ENCODE measurements at regions of chr15 and their contacts with region 1.

Region 1: GRCh38 chr15:68383161-68384074 is 48.5 kb downstream of the ITGA11 start:
- DNase-seq: peak; percentile 26 to 64
- H3K4me3 ChIP-seq: no peak overlapping the region
- H3K27ac ChIP-seq: peak overlapping the region in 2 of 5 donors; percentile 52 to 53
- H3K4me1 ChIP-seq: peaks cover 0 to 7% (median 0%) of the 10 kb centered on the region in 4 donors
- H3K27me3 ChIP-seq: no peaks in the 10 kb centered on the region
- CTCF ChIP-seq: peak in 5 of 7 experiments; percentile 19 to 63 (median 51)
- EP300 ChIP-seq: no peak
- POLR2A ChIP-seq: no peak

Region 2: GRCh38 chr15:68252925-68253534 is 130.4 kb before region 1 on chr15:
- intact Hi-C with region 1: loop called (anchors 10 kb)
- DNase-seq: peak; percentile 37 to 87
- H3K4me3 ChIP-seq: no peak overlapping the region
- H3K27ac ChIP-seq: no peak overlapping the region
- H3K4me1 ChIP-seq: peaks cover 5 to 23% (median 13%) of the 10 kb centered on the region in 4 donors
- H3K27me3 ChIP-seq: no peaks in the 10 kb centered on the region
- CTCF ChIP-seq: peak in 5 of 7 experiments; percentile 57 to 86 (median 80)
- EP300 ChIP-seq: no peak
- POLR2A ChIP-seq: no peak

Region 3: GRCh38 chr15:68316061-68316804 is 67.2 kb before region 1 on chr15:
- intact Hi-C with region 1: no loop called
- DNase-seq: peak; percentile 26 to 44
- H3K4me3 ChIP-seq: no peak overlapping the region
- H3K27ac ChIP-seq: no peak overlapping the region
- H3K4me1 ChIP-seq: no peaks in the 10 kb centered on the region
- H3K27me3 ChIP-seq: peaks cover 0 to 8% (median 0%) of the 10 kb centered on the region in 3 donors
- CTCF ChIP-seq: no peak
- EP300 ChIP-seq: no peak
- POLR2A ChIP-seq: no peak